ENCODE measurements at regions of chr20 and their contacts with region 1.

Region 1: GRCh38 chr20:47501483-47502270 is at the start of gene NCOA3:
- DNase-seq: peak; percentile 92
- H3K4me3 ChIP-seq: peak within 1 kb of the TSS; percentile 80 to 94 (median 93)
- H3K27ac ChIP-seq: peak within 1 kb of the TSS; percentile 71
- H3K4me1 ChIP-seq: peaks cover 19% of the 10 kb centered on the region
- H3K27me3 ChIP-seq: no peaks in the 10 kb centered on the region
- CTCF ChIP-seq: peak; percentile 17 to 66
- POLR2A ChIP-seq: peak; percentile 96
- total RNA-seq, gene NCOA3: 26.7 and 35.6 TPM in 2 replicates

Region 2: GRCh38 chr20:47196091-47197081 is 305.3 kb before region 1 on chr20:
- CTCF ChIA-PET with region 1: interaction called, 11 read pairs
- POLR2A ChIA-PET with region 1: no interaction called
- dilution Hi-C with region 1: no loop called
- intact Hi-C with region 1: loop called (anchors 2 kb)
- DNase-seq: peak; percentile 63
- H3K4me3 ChIP-seq: no peak overlapping the region
- H3K27ac ChIP-seq: no peak overlapping the region
- H3K4me1 ChIP-seq: peaks cover 3% of the 10 kb centered on the region
- H3K27me3 ChIP-seq: peaks cover 0 to 2% of the 10 kb centered on the region in 2 experiments
- CTCF ChIP-seq: peak; percentile 95 to 98
- POLR2A ChIP-seq: no peak

Region 3: GRCh38 chr20:47205577-47206498 is 295.8 kb before region 1 on chr20:
- CTCF ChIA-PET with region 1: interaction called, 9 read pairs
- POLR2A ChIA-PET with region 1: no interaction called
- dilution Hi-C with region 1: no loop called
- intact Hi-C with region 1: loop called (anchors 2 kb)
- DNase-seq: peak; percentile 64
- H3K4me3 ChIP-seq: no peak overlapping the region
- H3K27ac ChIP-seq: no peak overlapping the region
- H3K4me1 ChIP-seq: peaks cover 7% of the 10 kb centered on the region
- H3K27me3 ChIP-seq: no peaks in the 10 kb centered on the region
- CTCF ChIP-seq: peak; percentile 73 to 81
- POLR2A ChIP-seq: no peak

Region 4: DNA sequence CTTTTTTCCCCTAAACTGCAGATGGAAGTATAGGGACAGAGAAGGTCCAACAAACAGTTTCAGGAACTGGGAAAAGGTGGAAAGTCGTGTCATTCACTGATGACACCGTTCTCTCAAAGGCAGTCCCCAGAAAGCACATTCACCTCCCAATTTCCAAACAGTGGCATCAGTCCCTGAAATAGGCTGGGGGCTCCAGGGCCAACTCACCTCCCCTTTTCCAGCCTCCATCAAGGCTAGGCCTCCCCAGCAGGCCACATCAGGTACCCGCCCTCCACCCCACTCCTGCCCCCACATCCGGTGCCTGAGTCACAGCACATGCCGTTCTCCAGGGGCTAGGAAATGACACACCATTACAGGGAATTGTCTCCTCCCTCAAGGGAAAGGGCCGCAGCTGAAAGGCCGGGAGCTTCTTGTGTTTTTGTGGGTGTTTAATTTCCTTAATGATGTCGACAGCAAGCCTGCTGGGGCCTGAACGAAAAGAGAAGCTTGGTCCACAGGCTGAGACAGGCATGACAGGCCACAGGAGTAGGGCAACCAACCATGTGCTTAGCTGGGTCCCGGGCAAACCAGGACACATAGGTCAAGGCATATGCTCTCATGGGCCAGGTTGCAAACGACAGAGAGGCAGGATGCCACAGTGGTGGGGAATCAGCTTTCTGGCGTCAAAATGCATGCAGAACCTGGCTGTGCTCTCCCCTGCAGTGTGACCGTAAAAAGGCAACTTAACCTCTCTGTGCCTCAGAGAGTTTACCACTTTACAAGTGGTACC is 184.4 kb before region 1 on chr20:
- CTCF ChIA-PET with region 1: no interaction called
- POLR2A ChIA-PET with region 1: no interaction called
- dilution Hi-C with region 1: no loop called
- intact Hi-C with region 1: loop called (anchors 5 kb)
- DNase-seq: peak; percentile 97
- H3K4me3 ChIP-seq: peak overlapping the region in 1 of 3 experiments; percentile 15
- H3K27ac ChIP-seq: peak overlapping the region; percentile 86
- H3K4me1 ChIP-seq: peaks cover 67% of the 10 kb centered on the region
- H3K27me3 ChIP-seq: no peaks in the 10 kb centered on the region
- CTCF ChIP-seq: no peak
- POLR2A ChIP-seq: peak; percentile 90

Region 5: GRCh38 chr20:47464380-47465101 is 37.1 kb before region 1 on chr20:
- CTCF ChIA-PET with region 1: no interaction called
- POLR2A ChIA-PET with region 1: no interaction called
- dilution Hi-C with region 1: no loop called
- intact Hi-C with region 1: loop called (anchors 2 kb)
- DNase-seq: peak; percentile 94
- H3K4me3 ChIP-seq: no peak overlapping the region
- H3K27ac ChIP-seq: no peak overlapping the region
- H3K4me1 ChIP-seq: peaks cover 6% of the 10 kb centered on the region
- H3K27me3 ChIP-seq: no peaks in the 10 kb centered on the region
- CTCF ChIP-seq: peak; percentile 13 to 27
- POLR2A ChIP-seq: no peak

Region 6: DNA sequence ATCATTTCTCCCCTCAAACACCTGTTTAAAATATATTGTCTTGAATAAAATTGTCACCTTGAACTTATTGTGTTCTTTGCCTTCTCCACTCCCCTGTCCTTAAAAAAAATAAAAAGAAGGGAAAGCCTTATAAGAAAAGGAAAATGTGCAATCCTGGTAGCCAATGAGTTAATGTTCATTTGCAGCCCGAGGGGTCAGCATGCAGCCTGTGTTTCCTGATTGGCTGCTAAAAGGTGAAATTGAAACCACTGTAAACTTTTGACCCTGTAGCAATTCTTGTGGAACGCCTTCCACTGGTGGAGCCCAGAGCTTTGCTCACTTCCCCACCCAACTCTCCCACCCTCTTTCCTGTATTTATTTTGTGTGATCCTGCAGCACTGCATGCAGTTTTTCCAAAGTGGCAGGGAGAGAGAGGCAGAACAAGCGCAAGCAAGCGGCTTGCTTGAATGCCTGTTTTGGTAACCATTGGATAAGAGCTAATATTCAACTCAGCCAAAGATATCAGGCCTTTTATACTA is 74.9 kb after region 1 on chr20:
- CTCF ChIA-PET with region 1: interaction called, 13 read pairs
- POLR2A ChIA-PET with region 1: interaction called, 5 read pairs
- dilution Hi-C with region 1: no loop called
- intact Hi-C with region 1: loop called (anchors 2 kb)
- DNase-seq: peak; percentile 95
- H3K4me3 ChIP-seq: peak overlapping the region in 1 of 3 experiments; percentile 58
- H3K27ac ChIP-seq: peak overlapping the region; percentile 55
- H3K4me1 ChIP-seq: peaks cover 60% of the 10 kb centered on the region
- H3K27me3 ChIP-seq: no peaks in the 10 kb centered on the region
- CTCF ChIP-seq: no peak
- POLR2A ChIP-seq: peak; percentile 80